ENCODE measurements at regions of chr1 and their contacts with region 1.

Region 1: DNA sequence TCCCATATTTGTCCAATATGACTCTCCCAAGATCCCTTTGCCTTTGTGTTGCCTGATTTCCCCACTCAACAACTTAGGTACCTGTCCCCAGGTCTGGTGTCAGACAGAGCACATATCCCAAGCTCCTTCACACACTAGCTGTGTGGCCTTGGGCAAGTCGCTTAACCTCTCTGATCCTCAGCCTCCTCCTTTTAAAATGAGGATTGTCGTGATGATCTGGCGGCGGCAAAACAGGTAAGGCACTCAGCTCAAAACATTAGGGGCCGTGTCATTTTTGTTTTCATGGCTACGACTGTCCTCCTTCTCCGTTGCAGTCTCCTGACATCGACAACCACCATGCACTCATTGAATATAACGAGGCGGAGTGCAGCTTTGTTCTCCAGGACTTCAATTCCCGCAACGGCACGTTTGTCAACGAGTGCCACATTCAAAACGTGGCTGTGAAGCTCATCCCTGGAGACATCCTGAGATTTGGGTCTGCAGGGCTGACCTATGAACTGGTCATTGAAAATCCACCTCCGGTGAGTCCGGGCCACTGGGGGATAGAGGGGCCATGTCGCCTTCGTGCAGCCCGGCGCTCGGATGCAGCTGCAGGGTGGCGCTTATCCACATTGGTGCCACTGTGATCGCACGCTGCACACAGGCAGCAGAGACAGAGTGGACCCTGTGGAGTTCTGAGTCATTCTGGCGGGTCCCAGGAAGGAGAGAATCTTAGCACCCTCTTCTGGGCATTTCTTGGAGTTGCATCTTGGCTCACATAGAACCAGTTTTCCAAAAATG is 25.2 kb downstream of the FHAD1 start:
- DNase-seq: peak; percentile 60
- ATAC-seq: peak; percentile 86 to 93

Region 2: DNA sequence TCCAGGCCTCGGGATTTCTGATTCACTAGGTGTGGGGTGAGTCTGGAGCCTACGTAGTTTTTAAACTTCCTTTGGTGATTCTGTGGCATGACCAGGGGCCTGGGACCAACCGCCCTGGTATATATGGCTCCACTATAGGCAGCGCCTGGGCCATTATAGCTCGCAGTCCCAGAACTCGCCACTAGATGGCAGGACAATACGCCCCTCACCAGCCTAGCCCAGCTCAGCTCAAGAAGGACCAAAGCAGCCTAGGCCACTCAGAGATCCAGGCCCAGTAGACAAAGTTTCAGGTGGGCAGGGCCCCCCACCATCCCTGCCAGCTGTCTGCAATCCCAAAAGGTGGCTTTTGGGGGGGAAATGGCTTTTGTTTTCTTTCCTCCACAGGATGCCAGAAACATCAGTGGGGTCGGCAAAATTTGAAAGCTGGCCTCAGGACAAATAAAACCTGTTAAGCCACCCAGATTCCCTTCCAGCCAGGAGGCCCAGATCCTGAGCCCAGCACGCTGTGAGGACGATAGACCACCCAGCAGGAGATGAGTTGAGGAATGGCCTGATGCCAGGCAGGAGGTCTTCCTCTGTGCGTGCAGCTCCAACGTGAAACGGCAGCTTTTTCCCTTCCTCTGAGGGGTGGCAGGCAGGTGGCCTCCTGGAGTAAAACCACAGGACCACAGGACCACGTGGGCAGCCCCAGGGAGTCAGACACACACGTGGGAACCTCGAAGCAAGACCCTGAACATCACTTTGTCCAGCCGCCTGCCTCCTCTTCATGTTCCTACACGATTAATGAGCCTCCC is 143.5 kb before region 1 on chr1:
- intact Hi-C with region 1: loop called in 1 of 2 experiments (anchors 5 kb)
- DNase-seq: peak; percentile 72
- ATAC-seq: peak; percentile 78 to 95

Region 3: DNA sequence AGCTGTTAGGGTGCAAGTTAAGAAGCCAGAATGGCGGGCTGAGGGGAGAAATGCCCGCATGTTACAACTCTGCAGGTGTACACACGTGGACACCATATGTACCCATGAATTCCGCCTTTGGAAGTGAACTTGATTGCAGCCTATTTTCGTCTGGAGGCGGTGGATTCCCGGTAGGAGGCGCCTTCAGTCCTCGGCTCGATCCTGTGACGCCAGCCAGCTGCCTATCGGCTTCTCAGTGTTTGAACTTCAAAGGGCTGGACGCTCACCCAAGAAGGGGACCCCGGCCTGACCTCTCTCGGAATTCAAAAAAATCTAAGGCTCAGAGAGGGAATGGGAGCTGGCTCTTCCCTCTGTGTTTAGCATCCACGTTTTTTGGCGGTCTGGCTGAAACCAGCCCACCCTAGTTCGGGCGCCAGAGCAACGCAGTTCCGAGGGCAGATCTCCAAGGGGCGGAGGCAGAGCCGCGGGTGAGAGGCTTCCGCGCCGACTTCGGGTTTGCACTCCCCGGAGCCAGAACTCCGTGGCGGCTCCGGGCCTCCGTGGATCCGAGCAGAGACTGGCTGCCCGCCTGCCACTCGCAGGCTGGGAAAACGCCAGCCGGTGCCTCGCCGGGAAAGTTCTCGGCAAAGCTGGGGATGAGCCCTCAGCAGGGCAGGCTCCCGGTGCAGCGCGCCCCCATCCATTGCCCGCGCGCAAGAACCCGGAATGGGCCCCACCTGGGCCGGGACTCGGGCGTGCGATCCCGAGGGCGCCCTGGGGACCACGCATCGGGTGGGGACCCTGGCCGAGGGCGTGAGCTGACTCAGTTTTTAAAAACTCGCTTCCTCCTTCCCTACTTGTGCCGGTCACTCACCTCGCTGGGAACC is 119.6 kb before region 1 on chr1:
- intact Hi-C with region 1: loop called (anchors 1 to 5 kb)
- DNase-seq: peak; percentile 88
- ATAC-seq: peak; percentile 67 to 71

Measured in left cardiac atrium (tissue), 4 donors.